ENCODE measurements at regions of chr1 and their contacts with region 1.

Region 1: GRCh38 chr1:211874521-211875347 is 44.2 kb upstream of the LPGAT1 start:
- DNase-seq: no peak
- ATAC-seq: no peak
- H3K4me3 ChIP-seq: no peak overlapping the region
- H3K27ac ChIP-seq: no peak overlapping the region
- H3K4me1 ChIP-seq: no peaks in the 10 kb centered on the region
- H3K27me3 ChIP-seq: no peaks in the 10 kb centered on the region; the same call in 1 of the 2 replicates
- CTCF ChIP-seq: no peak

Region 2: GRCh38 chr1:211781260-211781659 is 93.5 kb before region 1 on chr1:
- CTCF ChIA-PET with region 1: no interaction called
- POLR2A ChIA-PET with region 1: no interaction called
- in situ Hi-C with region 1: no loop called
- intact Hi-C with region 1: loop called (anchors 5 kb)
- DNase-seq: no peak
- ATAC-seq: no peak
- H3K4me3 ChIP-seq: no peak overlapping the region
- H3K27ac ChIP-seq: no peak overlapping the region
- H3K4me1 ChIP-seq: no peaks in the 10 kb centered on the region
- H3K27me3 ChIP-seq: no peaks in the 10 kb centered on the region
- CTCF ChIP-seq: no peak

Region 3: DNA sequence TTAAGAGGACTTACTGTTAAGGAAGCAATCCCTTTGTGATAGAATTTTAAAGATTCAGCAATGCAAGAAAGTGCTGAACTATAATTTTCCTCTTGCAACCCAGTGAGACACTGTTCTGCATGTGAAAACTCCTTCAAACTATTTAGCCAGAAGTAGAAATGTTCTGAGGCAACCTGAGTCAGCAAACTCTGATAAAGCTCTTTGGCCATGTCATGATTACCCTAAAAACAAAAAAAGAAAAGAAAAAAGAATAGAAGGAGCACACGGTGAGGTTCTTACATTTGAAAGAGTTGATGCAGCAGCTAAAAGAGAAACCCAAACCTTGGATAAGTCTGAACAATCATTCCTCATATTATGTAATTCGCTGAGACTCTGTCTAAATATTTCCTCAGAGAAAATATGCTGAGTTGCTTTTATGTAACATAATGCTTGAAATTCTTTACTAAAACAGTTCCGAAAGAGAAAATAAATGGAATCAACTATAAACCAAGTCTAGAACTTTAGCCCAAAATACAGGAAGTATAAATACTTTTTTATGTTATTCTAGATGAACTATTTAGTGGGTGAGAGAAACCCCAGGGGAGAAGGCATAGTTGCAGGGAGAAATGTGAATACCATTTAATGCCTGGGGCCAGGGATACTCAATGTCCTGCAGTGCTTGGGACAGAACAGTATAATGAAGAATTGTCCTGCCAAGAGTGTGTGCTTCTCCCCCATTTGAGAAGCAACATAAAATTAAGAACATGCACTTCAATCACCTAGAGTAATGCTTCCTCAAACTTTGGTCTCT is 100.6 kb after region 1 on chr1:
- CTCF ChIA-PET with region 1: no interaction called
- POLR2A ChIA-PET with region 1: no interaction called
- in situ Hi-C with region 1: no loop called
- intact Hi-C with region 1: no loop called
- DNase-seq: no peak
- ATAC-seq: no peak
- H3K4me3 ChIP-seq: no peak overlapping the region
- H3K27ac ChIP-seq: no peak overlapping the region
- H3K4me1 ChIP-seq: no peaks in the 10 kb centered on the region
- H3K27me3 ChIP-seq: no peaks in the 10 kb centered on the region
- CTCF ChIP-seq: no peak

Measured in Panc1 (cell line).